Breast epithelium (tissue), 4 donors: ENCODE measurements at regions of chrX and their contacts with region 1.

Region 1: DNA sequence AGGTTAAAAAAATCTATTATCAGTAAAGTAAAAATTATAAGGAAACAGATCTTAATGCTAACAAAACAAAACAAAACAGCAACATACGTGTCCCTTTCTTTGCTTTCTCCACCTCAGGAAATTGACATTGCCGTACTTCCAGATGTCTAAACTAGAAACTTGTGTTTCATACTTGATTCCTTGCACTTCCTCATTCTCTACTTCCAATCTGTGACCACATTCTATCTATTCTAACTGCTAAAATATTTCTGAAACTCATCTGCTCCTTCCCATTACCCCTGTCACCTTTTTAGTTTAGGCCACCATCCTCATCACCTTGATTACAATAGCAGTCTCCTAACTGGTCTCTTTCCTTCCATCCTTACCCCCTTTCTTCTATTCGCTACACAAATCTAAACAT is 22.5 kb upstream of the RPA4 start:
- DNase-seq: no peak
- H3K4me3 ChIP-seq: no peak overlapping the region
- H3K27ac ChIP-seq: no peak overlapping the region
- H3K4me1 ChIP-seq: no peaks in the 10 kb centered on the region
- H3K27me3 ChIP-seq: peaks cover 0 to 7% of the 10 kb centered on the region in 2 donors
- CTCF ChIP-seq: no peak
- POLR2A ChIP-seq: no peak

Region 2: DNA sequence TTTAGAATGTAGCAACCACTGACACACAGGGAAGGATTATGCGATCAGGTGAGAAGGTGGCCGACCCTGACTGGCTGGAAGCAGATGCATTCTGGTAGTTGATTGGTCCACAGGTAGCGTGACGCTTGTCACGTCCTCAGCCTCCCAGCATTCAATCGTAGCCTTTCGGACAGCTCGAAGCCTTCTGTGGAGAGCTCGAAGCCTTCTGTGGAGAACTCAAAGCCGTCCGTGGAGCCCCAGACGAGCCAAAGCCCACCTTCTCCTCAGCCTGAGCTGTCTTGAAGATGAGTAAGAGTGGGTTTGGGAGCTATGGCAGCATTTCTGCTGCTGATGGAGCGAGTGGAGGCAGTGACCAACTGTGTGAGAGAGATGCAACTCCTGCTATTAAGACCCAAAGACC is 22.8 kb after region 1 on chrX:
- intact Hi-C with region 1: no loop called
- DNase-seq: no peak
- H3K4me3 ChIP-seq: no peak overlapping the region
- H3K27ac ChIP-seq: no peak overlapping the region
- H3K4me1 ChIP-seq: no peaks in the 10 kb centered on the region
- H3K27me3 ChIP-seq: no peaks in the 10 kb centered on the region
- CTCF ChIP-seq: no peak
- POLR2A ChIP-seq: no peak

Region 3: GRCh38 chrX:97326456-97326855 is 465.2 kb after region 1 on chrX:
- intact Hi-C with region 1: loop called (anchors 5 kb)
- DNase-seq: no peak
- H3K4me3 ChIP-seq: no peak overlapping the region
- H3K27ac ChIP-seq: no peak overlapping the region
- H3K4me1 ChIP-seq: no peaks in the 10 kb centered on the region
- H3K27me3 ChIP-seq: peaks cover 0 to 5% of the 10 kb centered on the region in 2 donors
- CTCF ChIP-seq: no peak
- POLR2A ChIP-seq: no peak